GM12878 (cell line): ENCODE measurements at regions of chr15 and their contacts with region 1.

Region 1: DNA sequence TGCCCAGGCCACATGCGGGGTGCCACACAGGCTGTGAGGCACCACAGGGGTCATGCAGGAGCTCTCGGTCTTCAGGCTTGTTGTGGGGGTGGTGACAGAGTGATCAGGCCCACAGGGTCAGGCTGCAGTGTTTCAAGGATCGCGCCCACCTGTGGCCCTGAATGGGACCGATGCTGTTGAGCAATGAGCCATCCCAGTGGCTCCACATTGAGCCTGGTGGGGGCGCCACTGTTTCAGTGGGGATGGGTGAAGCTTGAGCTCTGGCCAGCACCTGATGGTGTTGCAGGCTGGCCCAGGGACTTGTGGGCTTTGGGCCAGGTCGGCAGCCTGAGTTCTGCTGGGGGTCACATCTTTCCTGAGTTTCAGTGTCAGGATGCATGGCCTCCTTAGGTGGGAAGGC is 230.1 kb downstream of the UBE3A start:
- DNase-seq: no peak
- ATAC-seq: no peak
- H3K4me3 ChIP-seq: no peak overlapping the region
- H3K27ac ChIP-seq: no peak overlapping the region
- H3K4me1 ChIP-seq: no peaks in the 10 kb centered on the region
- H3K27me3 ChIP-seq: no peaks in the 10 kb centered on the region
- CTCF ChIP-seq: no peak
- EP300 ChIP-seq: no peak
- POLR2A ChIP-seq: no peak
- RAD21 ChIP-seq: no peak

Region 2: GRCh38 chr15:25469377-25469776 is 260.6 kb after region 1 on chr15:
- CTCF ChIA-PET with region 1: no interaction called
- POLR2A ChIA-PET with region 1: no interaction called
- RAD21 ChIA-PET with region 1: no interaction called
- SMC1A ChIA-PET with region 1: no interaction called
- in situ Hi-C with region 1: loop called (anchors 25 kb)
- intact Hi-C with region 1: no loop called
- DNase-seq: no peak
- ATAC-seq: no peak
- H3K4me3 ChIP-seq: no peak overlapping the region
- H3K27ac ChIP-seq: no peak overlapping the region
- H3K4me1 ChIP-seq: no peaks in the 10 kb centered on the region
- H3K27me3 ChIP-seq: no peaks in the 10 kb centered on the region
- CTCF ChIP-seq: no peak
- EP300 ChIP-seq: no peak
- POLR2A ChIP-seq: no peak
- RAD21 ChIP-seq: no peak

Region 3: DNA sequence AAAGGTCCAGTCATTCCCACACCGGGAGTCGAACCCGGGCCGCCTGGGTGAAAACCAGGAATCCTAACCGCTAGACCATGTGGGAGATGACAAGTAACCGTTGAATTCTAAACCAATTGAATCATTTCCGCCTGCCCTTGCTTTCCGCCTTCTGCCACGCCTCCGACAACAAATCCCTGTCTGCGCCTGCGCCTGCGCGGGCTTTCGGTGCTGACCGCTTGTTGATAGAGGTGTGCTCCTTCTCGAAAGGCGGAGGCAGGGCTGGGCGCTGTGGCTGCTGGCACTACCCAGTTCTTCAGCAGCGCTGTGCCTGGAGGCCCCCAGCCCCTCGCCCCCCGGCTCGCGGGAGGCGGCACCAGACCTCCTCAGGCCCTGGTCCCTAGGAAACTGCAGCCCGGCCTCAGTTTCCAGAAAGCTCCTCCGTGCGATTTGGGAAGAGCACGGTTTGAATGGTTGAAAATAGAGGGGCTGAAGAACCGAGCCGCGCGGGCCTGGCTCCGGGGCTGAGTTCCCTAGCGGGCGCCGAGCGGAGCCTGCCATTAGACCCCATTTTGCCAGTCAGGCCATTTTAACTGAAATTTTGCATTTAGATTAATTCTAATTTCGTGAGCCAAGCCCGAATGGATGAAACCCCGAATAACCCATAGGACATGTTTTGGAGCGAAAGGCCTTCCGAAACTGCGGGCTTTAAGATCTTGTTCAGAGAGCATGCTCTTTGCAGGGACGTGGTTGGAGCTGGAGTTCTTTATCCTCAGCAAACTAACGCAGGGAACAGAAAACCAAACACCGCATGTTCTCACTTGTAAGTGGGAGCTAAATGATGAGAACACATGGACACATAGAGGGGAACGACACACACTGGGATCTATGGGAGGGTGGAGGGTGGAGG is 873.7 kb after region 1 on chr15:
- CTCF ChIA-PET with region 1: no interaction called
- POLR2A ChIA-PET with region 1: no interaction called
- RAD21 ChIA-PET with region 1: no interaction called
- SMC1A ChIA-PET with region 1: no interaction called
- in situ Hi-C with region 1: loop called (anchors 25 kb)
- intact Hi-C with region 1: no loop called
- DNase-seq: peak; percentile 53
- ATAC-seq: peak; percentile 99
- H3K4me3 ChIP-seq: peak overlapping the region; percentile 40; the same call in 1 of the 2 replicates
- H3K27ac ChIP-seq: no peak overlapping the region
- H3K4me1 ChIP-seq: no peaks in the 10 kb centered on the region
- H3K27me3 ChIP-seq: no peaks in the 10 kb centered on the region
- CTCF ChIP-seq: no peak
- EP300 ChIP-seq: no peak
- POLR2A ChIP-seq: 0 out of 2 replicates have a peak, but pooled peaks have one; percentile 39
- RAD21 ChIP-seq: no peak